GM12878 (cell line): ENCODE measurements at regions of chr5 and their contacts with region 1.

Region 1: DNA sequence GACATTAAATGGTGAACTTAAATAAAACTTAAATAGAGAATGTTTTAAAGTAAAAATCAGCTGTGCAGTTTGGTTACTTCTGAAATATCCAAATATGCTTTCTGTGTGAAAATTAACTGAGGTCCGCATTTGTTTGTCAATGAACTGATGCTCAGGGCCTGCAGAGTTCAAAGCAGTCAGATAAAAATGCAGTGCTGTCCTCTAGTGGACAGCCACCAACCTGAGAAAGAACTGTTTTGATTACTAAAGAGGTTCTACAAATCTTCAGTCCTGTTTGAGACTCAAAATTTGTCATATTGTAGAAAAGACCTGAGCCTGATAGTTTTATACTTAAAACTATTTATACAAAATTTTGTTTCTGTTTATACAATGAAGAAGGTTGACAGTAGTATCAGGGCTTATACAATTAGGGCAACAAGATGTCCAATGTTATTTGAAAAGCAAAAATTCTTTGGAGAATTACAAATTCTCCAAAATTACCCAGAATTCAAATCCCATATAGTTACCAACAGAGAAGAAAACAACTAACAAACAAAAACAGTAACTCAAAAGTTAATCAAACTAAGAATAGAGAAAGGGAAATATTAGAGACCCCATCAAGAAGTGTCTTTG is 232.3 kb upstream of the TBCA start:
- DNase-seq: no peak
- ATAC-seq: peak; percentile 84
- H3K4me3 ChIP-seq: no peak overlapping the region
- H3K27ac ChIP-seq: no peak overlapping the region
- H3K4me1 ChIP-seq: peaks cover 3% of the 10 kb centered on the region; the same call in 1 of the 2 replicates
- H3K27me3 ChIP-seq: no peaks in the 10 kb centered on the region
- CTCF ChIP-seq: peak; percentile 77 to 83 (median 79)
- EP300 ChIP-seq: no peak
- POLR2A ChIP-seq: no peak
- RAD21 ChIP-seq: peak; percentile 89

Region 2: GRCh38 chr5:77645158-77645994 is 363.1 kb before region 1 on chr5:
- CTCF ChIA-PET with region 1: no interaction called
- POLR2A ChIA-PET with region 1: no interaction called
- RAD21 ChIA-PET with region 1: no interaction called
- SMC1A ChIA-PET with region 1: interaction called, 5 read pairs
- in situ Hi-C with region 1: no loop called
- intact Hi-C with region 1: loop called (anchors 5 kb)
- DNase-seq: no peak
- ATAC-seq: peak; percentile 99
- H3K4me3 ChIP-seq: peak overlapping the region; percentile 53; the same call in 1 of the 2 replicates
- H3K27ac ChIP-seq: no peak overlapping the region
- H3K4me1 ChIP-seq: no peaks in the 10 kb centered on the region
- H3K27me3 ChIP-seq: peaks cover 3 to 26% of the 10 kb centered on the region in 2 experiments
- CTCF ChIP-seq: peak; percentile 51 to 55 (median 52); a peak in 5 of 6 replicates
- EP300 ChIP-seq: no peak
- POLR2A ChIP-seq: no peak
- RAD21 ChIP-seq: peak; percentile 67